ENCODE measurements at regions of chr17 and their contacts with region 1.

Region 1: GRCh38 chr17:38982858-38983746 is 15.9 kb upstream of the FBXO47 start:
- DNase-seq: peak; percentile 45
- H3K4me3 ChIP-seq: no peak overlapping the region
- H3K27ac ChIP-seq: no peak overlapping the region
- H3K4me1 ChIP-seq: peaks cover 0 to 3% (median 0%) of the 10 kb centered on the region in 4 donors
- H3K27me3 ChIP-seq: peaks cover 5% of the 10 kb centered on the region
- CTCF ChIP-seq: peak; percentile 72 to 83 (median 75)
- EP300 ChIP-seq: no peak
- POLR2A ChIP-seq: no peak

Region 2: DNA sequence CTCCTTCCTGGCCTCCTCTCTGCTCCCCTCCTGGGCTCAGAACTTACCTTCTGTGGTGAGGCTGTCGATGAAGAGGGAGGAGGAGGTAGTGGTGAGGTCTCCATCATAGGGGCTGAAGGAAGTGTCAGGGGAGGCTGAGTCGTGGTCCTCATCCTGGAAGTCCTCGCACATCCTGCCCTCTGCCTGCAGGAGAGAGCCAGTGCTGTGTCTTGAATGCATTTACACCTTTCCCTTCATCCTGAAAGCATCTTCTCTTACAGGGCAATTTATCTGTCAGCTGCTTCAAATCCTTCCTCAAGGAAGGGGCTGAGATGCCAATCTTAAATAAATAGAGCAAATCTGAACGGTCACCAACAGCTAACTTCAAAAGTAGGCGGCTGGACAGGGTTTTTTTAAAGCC is 94.8 kb after region 1 on chr17:
- in situ Hi-C with region 1: no loop called
- intact Hi-C with region 1: no loop called
- DNase-seq: no peak
- H3K4me3 ChIP-seq: no peak overlapping the region
- H3K27ac ChIP-seq: no peak overlapping the region
- H3K4me1 ChIP-seq: peaks cover 0 to 23% (median 0%) of the 10 kb centered on the region in 4 donors
- H3K27me3 ChIP-seq: no peaks in the 10 kb centered on the region
- CTCF ChIP-seq: no peak
- EP300 ChIP-seq: no peak
- POLR2A ChIP-seq: no peak

Region 3: DNA sequence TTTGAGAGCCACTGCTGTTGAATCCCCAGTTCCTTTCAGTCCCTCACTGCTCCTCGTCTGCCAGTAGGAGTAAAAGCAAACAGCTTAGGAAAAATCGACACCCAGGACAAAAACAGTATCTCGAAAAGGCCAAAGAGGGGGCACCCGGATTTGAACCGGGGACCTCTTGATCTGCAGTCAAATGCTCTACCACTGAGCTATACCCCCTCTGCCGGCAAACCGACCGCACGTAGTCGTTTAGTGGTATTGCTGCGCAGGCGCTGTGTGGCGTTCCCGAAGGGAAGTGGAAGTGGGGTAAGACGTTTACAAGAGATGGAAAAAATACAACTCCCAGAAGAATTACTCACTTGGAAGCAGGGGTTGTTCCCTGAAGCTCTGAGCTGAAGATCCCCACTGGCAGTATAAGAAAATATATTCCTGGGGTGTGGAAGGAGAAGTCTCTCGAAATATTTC is 170.5 kb after region 1 on chr17:
- in situ Hi-C with region 1: loop called (anchors 5 to 25 kb)
- intact Hi-C with region 1: loop called (anchors 2 kb)
- DNase-seq: peak; percentile 94
- H3K4me3 ChIP-seq: peak overlapping the region; percentile 54 to 79 (median 72)
- H3K27ac ChIP-seq: peak overlapping the region; percentile 87 to 98 (median 90)
- H3K4me1 ChIP-seq: peaks cover 8 to 28% (median 22%) of the 10 kb centered on the region in 4 donors
- H3K27me3 ChIP-seq: peaks cover 28% of the 10 kb centered on the region
- CTCF ChIP-seq: peak in 4 of 5 experiments; percentile 6 to 42 (median 20)
- EP300 ChIP-seq: no peak
- POLR2A ChIP-seq: no peak

Region 4: GRCh38 chr17:39939588-39940419 is 956.7 kb after region 1 on chr17:
- in situ Hi-C with region 1: no loop called
- intact Hi-C with region 1: no loop called
- DNase-seq: no peak
- H3K4me3 ChIP-seq: no peak overlapping the region
- H3K27ac ChIP-seq: peak overlapping the region in 2 of 4 donors; percentile 25 to 49
- H3K4me1 ChIP-seq: no peaks in the 10 kb centered on the region
- H3K27me3 ChIP-seq: no peaks in the 10 kb centered on the region
- CTCF ChIP-seq: peak in 2 of 5 experiments; percentile 10 to 34
- EP300 ChIP-seq: no peak
- POLR2A ChIP-seq: no peak

Measured in transverse colon (tissue), 4 donors.